OCI-LY7 (cell line): ENCODE measurements at regions of chr7 and their contacts with region 1.

Region 1: DNA sequence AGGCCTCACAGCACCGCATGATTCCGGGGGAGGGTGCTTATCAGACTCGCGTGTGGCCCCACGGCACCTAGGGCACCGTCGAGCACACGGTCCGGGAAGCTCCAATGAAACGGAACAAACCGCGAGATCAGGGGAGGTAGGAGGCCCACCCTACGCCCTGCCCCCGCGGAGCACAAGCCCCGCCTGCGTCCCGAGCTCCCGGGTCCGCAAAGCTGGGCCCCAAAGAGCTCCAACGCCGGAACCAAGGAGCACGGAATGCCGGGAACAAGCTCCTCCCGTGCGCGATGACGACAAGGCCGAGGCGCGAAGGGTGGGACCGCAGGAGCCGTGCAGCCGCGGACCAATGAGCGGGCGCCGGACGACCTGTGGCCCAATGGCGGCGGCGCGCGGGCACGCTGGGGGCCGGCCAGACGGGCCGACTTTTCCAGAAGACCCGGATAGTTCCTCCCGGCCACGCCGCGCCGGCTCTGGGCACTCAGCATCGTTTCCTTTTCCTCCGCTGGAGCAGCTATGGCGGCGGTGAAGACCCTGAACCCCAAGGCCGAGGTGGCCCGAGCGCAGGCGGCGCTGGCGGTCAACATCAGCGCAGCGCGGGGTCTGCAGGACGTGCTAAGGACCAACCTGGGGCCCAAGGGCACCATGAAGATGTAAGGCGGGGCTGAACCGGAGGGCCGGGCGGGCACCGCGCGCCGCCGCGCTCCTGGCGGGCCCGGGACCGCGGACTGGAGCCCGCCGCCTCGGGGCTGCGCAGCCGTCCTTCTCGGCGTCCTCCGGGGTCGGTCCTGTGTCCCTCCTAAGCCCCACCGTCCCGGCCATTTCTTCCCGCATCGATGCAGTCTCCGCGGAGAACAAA is at the starts of genes CCT6A and PSPH:
- DNase-seq: peak; percentile 97
- H3K4me3 ChIP-seq: peak within 1 kb of the TSS; percentile 100
- H3K27ac ChIP-seq: peak within 1 kb of the TSS; percentile 66
- H3K4me1 ChIP-seq: peaks cover 58% of the 10 kb centered on the region
- CTCF ChIP-seq: no peak
- total RNA-seq, gene CCT6A: 151 and 196 TPM in 2 replicates
- total RNA-seq, gene PSPH: 62.9 and 64.7 TPM in 2 replicates

Region 2: DNA sequence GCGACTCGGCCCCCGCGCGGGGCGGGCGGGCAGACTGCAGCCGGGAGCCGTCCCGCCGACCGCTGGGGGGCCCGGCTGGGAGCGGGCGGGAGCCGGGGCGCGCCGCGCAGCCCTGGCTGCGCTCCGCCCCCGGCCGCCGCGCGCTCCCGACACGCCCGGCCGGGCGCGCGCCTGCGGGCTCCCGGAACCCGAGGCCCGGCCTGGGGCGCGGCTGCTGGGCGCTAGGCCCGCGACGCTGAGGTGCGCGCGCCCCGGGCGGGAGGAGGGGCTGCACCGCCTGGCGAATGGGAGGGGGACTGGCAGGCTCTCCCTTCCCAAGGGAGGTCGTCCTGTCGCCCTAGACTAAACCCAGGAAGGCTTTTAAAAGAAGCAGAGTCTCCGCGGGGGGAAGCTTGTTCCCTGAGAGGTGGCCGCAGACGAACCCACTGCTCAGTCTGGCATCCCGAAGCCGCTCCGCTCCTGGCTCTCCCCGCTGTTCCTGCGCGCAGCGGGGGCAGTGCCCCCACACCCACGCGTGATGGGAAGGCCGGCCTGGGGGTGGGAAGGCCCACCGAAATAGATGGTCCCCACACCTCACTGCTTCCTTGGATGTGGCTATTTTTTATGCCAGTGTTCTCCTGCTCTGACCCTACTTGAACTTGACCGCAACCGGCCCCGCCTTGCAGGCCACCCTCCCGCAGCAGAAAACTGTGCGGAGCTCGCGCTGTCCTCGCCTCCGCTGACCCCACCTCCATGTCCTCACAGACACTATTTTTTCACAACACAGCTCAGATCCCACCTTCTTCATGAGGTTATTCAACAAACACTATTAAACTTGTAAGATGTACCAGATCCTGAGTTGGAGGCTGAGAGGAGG is 479.0 kb before region 1 on chr7 and contains the start of gene VOPP1:
- CTCF ChIA-PET with region 1: no interaction called
- POLR2A ChIA-PET with region 1: interaction called, 3 read pairs
- intact Hi-C with region 1: loop called (anchors 2 kb)
- DNase-seq: peak; percentile 87
- H3K4me3 ChIP-seq: peak within 1 kb of the TSS; percentile 95
- H3K27ac ChIP-seq: peak within 1 kb of the TSS; percentile 60
- H3K4me1 ChIP-seq: peaks cover 48% of the 10 kb centered on the region
- CTCF ChIP-seq: no peak
- total RNA-seq, gene VOPP1: 66.9 and 68.8 TPM in 2 replicates

Region 3: DNA sequence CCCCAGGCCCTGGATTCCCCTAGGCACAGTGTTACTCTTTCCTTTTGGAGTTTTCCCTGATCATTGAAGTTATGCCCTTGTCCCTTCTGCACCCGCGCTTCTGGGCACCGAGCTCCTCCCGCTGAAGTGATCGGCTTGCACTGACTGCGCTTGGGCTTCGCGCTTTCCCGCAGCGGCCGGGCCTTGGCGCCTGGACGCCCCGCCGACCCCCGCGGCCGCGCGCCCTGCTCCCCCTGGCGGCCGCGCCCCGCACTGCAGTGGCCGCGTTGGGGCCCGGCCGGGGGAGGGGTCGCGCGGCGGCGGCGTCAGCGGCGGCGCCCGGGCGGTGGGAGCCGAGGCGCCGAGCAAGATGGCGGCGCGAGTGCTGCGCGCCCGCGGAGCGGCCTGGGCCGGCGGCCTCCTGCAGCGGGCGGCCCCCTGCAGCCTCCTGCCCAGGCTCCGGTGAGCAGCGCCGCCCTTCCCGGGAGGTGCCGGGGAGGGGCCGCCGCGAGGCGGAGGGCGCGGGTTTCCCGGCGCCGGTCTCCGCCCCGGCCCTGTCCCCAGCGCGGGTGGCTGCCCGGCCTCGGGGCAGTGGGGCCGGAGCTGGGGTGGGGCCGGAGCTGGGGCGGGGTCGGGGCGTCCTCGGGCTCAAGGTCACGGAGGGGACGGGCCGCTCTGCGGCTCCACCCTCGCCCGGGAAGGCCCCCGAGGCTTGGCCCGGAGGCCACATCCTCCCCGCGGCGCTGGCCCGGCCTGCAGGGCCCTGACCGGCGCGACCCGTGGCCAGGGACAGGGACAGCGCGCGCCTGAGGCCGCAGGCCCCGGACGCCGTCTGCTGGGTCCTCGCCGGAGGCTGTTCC is 87.1 kb before region 1 on chr7 and contains the start of gene NIPSNAP2:
- CTCF ChIA-PET with region 1: no interaction called
- POLR2A ChIA-PET with region 1: no interaction called
- intact Hi-C with region 1: loop called (anchors 2 kb)
- DNase-seq: peak; percentile 78
- H3K4me3 ChIP-seq: peak within 1 kb of the TSS; percentile 90
- H3K27ac ChIP-seq: peak within 1 kb of the TSS; percentile 28
- H3K4me1 ChIP-seq: peaks cover 13% of the 10 kb centered on the region
- CTCF ChIP-seq: peak; percentile 54
- total RNA-seq, gene NIPSNAP2: 28.9 and 35.9 TPM in 2 replicates

Region 4: DNA sequence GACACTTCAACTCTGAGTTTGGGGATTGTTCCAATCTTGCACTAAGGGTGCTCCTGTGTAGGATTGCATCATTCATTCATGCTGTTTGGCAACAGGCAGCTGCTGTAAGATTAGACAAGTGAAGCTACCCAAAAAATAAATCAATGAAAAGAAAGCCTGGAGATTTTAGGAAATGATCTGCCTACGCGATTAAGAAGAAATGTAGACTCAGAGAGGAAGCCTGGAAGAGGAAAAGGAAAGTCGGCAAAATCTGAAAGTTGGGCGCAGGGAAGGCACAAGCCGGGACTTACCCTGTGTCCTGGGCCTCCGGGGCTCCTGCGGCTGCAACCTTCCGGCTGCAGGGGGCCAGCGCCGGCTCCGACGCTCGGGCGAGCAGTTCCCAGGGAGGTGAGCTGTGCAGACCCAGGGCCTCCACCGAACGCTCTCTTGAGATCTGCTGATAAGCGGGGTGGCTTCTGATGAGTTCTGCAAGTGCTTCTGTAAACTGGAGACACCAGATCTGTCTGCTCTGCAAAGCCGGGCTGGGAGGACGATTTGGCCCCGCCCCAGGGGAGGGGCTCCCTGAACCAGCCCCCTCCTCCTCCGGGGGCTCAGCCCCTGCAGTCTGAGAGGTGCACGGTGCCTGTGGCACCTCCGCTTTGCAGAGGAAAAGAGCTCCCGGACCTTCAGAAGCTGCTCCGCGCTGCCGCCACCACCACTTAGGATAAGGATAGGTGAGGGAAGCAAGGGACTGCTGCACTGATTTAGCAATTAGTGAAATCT is 17.7 kb before region 1 on chr7:
- CTCF ChIA-PET with region 1: no interaction called
- POLR2A ChIA-PET with region 1: interaction called, 8 read pairs
- intact Hi-C with region 1: loop called (anchors 1 kb)
- DNase-seq: peak; percentile 85
- H3K4me3 ChIP-seq: peak overlapping the region; percentile 71
- H3K27ac ChIP-seq: peak overlapping the region; percentile 67
- H3K4me1 ChIP-seq: peaks cover 10% of the 10 kb centered on the region
- CTCF ChIP-seq: peak; percentile 51

Region 5: GRCh38 chr7:56063882-56064625 is 12.5 kb after region 1 on chr7 and contains the start of gene SUMF2:
- CTCF ChIA-PET with region 1: no interaction called
- POLR2A ChIA-PET with region 1: interaction called, 46 read pairs
- intact Hi-C with region 1: loop called (anchors 1 kb)
- DNase-seq: peak; percentile 93
- H3K4me3 ChIP-seq: peak within 1 kb of the TSS; percentile 91
- H3K27ac ChIP-seq: peak within 1 kb of the TSS; percentile 79
- H3K4me1 ChIP-seq: peaks cover 26% of the 10 kb centered on the region
- CTCF ChIP-seq: 0 out of 2 replicates have a peak, but pooled peaks have one; percentile 31
- total RNA-seq, gene SUMF2: 46.4 and 60.8 TPM in 2 replicates

Region 6: GRCh38 chr7:56106108-56107073 is 54.8 kb after region 1 on chr7 and contains the start of gene CHCHD2:
- CTCF ChIA-PET with region 1: no interaction called
- POLR2A ChIA-PET with region 1: interaction called, 11 read pairs
- intact Hi-C with region 1: loop called (anchors 2 kb)
- DNase-seq: peak; percentile 99
- H3K4me3 ChIP-seq: peak within 1 kb of the TSS; percentile 81
- H3K27ac ChIP-seq: peak within 1 kb of the TSS; percentile 54
- H3K4me1 ChIP-seq: peaks cover 35% of the 10 kb centered on the region
- CTCF ChIP-seq: no peak
- total RNA-seq, gene CHCHD2: 381 and 517 TPM in 2 replicates